Ascending aorta (tissue), 2 donors: ENCODE measurements at regions of chr2 and their contacts with region 1.

Region 1: DNA sequence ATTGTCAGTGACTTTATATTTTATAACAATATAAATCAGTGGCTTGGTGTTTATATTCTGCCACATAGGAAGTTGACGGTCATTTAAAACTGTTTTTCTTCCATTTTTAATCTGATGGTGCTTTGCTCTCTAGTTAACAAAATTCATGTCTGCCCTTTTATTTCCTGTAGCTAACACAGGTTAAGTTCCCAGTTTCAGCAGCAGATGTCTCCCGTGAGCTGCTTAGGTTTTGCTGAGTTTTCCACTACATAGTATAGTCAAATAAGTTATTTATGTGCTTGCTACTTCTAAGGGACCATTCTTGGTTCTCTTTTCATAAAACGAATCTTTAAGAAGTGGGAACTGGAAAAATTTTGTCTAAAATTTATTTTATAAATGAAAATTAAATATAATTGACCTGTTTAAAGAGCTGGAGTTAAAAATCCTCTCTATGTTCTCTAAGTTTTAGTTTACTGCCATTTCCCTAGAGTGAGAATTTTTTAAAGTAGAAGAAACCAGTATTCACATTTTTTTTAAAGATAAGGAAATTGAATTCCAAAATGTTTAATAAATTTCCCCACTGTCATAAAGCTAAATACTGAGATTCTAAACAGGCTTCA is 20.6 kb downstream of the HTR2B start:
- DNase-seq: peak in 1 of 2 donors; percentile 81
- H3K4me3 ChIP-seq: no peak overlapping the region
- H3K27ac ChIP-seq: peak overlapping the region; percentile 31 to 50
- H3K4me1 ChIP-seq: no peaks in the 10 kb centered on the region
- H3K27me3 ChIP-seq: no peaks in the 10 kb centered on the region
- CTCF ChIP-seq: peak; percentile 81 to 88 (median 83)

Region 2: DNA sequence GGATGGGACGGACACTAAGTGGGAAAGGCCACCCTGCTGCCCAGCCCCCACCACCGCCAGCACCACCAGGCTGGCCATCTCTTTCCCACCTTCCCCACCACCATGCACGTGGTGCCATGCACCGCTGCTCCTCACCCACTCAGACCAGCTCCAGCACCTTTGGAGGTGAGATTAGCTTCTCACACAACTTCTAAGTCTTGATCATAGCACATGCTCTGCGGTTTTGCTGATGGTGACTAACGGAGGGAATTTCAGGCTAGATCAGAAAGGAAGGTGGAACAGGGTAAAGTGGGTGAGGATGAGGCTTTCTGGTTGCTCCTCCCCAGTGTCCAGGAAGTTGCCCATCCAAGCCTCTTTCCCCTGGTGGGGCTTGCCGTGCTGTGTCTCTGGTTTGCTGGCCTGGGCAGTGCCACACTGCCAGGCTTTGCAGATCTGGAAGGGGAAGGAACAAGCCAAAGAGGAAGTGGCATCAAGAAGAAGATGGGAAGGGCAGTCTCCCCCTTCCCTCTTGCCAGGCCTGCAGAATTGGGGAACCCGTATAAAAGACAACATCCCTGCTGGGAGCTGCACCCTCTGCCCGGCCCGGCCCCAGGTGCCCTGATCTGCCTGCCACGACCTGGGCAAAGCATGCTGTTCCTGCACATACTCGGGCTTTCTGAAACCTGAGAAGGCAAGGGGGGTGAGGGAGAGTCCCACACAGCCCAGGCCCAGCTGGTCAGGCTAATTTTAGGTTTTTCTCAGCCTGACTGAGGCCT is 435.9 kb before region 1 on chr2:
- intact Hi-C with region 1: no loop called
- DNase-seq: no peak
- H3K4me3 ChIP-seq: no peak overlapping the region
- H3K27ac ChIP-seq: peak overlapping the region; percentile 6 to 37
- H3K4me1 ChIP-seq: no peaks in the 10 kb centered on the region
- H3K27me3 ChIP-seq: no peaks in the 10 kb centered on the region
- CTCF ChIP-seq: no peak

Region 3: DNA sequence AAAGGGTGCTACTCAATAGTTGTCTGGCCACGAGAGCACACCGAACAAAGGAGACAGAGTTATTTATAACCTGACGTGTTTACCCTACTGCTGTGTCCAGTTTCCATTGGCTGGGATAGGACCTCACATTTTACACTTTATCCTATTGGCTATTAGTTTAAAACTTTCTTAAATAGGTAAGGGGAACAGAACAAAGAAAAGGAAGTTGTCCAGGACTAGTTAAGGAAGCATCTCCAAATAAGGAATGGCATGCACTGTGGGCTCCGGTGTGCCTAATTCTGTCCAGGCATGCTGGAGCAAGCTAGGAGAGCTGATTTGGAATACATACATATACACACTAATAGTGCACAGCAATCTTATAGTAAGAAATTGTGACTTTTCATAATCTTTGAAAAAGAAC is 319.4 kb before region 1 on chr2:
- intact Hi-C with region 1: no loop called
- DNase-seq: no peak
- H3K4me3 ChIP-seq: no peak overlapping the region
- H3K27ac ChIP-seq: peak overlapping the region in 1 of 2 donors; percentile 16
- H3K4me1 ChIP-seq: peaks cover 0 to 9% of the 10 kb centered on the region in 2 donors
- H3K27me3 ChIP-seq: no peaks in the 10 kb centered on the region
- CTCF ChIP-seq: no peak

Region 4: GRCh38 chr2:231124838-231125568 is 20.8 kb after region 1 on chr2 and contains the start of gene HTR2B:
- intact Hi-C with region 1: no loop called
- DNase-seq: no peak
- H3K4me3 ChIP-seq: peak within 1 kb of the TSS; percentile 26 to 48
- H3K27ac ChIP-seq: peak within 1 kb of the TSS in 1 of 2 donors; percentile 38
- H3K4me1 ChIP-seq: peaks cover 3 to 8% of the 10 kb centered on the region in 2 donors
- H3K27me3 ChIP-seq: no peaks in the 10 kb centered on the region
- CTCF ChIP-seq: no peak
- total RNA-seq, gene HTR2B: 0.75 TPM

Region 5: GRCh38 chr2:231394211-231395141 is 290.3 kb after region 1 on chr2:
- intact Hi-C with region 1: no loop called
- DNase-seq: no peak
- H3K4me3 ChIP-seq: peak overlapping the region in 1 of 2 donors; percentile 61
- H3K27ac ChIP-seq: no peak overlapping the region
- H3K4me1 ChIP-seq: peaks cover under 1 to 2% of the 10 kb centered on the region in 2 donors
- H3K27me3 ChIP-seq: no peaks in the 10 kb centered on the region
- CTCF ChIP-seq: no peak

Region 6: GRCh38 chr2:231411831-231412617 is 307.8 kb after region 1 on chr2:
- intact Hi-C with region 1: loop called (anchors 2 kb)
- DNase-seq: peak; percentile 53 to 93
- H3K4me3 ChIP-seq: peak overlapping the region; percentile 73 to 92
- H3K27ac ChIP-seq: peak overlapping the region; percentile 8 to 26
- H3K4me1 ChIP-seq: peaks cover 0 to 5% of the 10 kb centered on the region in 2 donors
- H3K27me3 ChIP-seq: no peaks in the 10 kb centered on the region
- CTCF ChIP-seq: peak; percentile 82 to 97 (median 96)

Region 7: DNA sequence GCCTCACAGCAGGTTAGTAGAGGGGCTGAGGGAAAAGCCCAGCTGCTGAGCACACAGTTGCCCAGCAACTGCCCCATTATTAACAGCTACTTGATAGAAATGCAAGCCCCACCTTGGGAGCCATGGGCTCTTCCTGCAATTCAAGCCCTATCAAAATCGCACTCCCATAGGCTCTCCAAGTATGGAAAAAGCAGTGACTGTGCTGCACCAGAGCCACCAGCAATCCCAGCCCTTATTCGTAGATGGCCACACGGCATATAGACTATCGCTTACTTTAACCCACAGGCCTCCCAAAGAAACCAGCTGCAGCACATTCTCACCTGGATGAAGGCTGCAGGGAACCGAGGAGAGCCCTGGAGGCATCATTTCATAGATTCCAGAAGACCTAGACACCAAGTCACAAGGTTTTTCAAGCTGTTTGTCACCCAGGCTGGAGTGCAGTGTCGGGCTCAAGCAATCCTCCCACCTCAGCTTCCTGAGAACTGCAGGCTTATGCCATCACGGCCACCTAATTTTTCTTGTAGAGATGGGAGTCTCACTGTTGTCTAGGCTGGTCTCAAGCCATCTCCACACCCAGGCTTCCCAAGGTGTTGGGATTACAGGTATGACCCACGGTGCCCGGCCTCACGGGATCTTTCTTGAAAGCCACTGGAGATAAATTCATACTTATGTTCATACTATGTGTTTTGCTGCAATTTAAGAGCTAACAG is 348.7 kb after region 1 on chr2:
- intact Hi-C with region 1: loop called (anchors 2 kb)
- DNase-seq: no peak
- H3K4me3 ChIP-seq: no peak overlapping the region
- H3K27ac ChIP-seq: peak overlapping the region in 1 of 2 donors; percentile 15
- H3K4me1 ChIP-seq: no peaks in the 10 kb centered on the region
- H3K27me3 ChIP-seq: no peaks in the 10 kb centered on the region
- CTCF ChIP-seq: no peak